ENCODE measurements at regions of chr3 and their contacts with region 1.

Region 1: GRCh38 chr3:99638167-99638948 is at the start of gene COL8A1:
- DNase-seq: peak; percentile 47
- H3K4me3 ChIP-seq: peak within 1 kb of the TSS; percentile 89
- H3K27ac ChIP-seq: peak within 1 kb of the TSS; percentile 96
- H3K27me3 ChIP-seq: no peaks in the 10 kb centered on the region
- CTCF ChIP-seq: no peak
- polyA plus RNA-seq, gene COL8A1: 101 and 147 TPM in 2 replicates

Region 2: GRCh38 chr3:99666201-99666600 is 27.8 kb after region 1 on chr3:
- CTCF ChIA-PET with region 1: no interaction called
- POLR2A ChIA-PET with region 1: no interaction called
- DNase-seq: no peak
- H3K4me3 ChIP-seq: no peak overlapping the region
- H3K27ac ChIP-seq: no peak overlapping the region
- H3K27me3 ChIP-seq: no peaks in the 10 kb centered on the region
- CTCF ChIP-seq: no peak

Region 3: DNA sequence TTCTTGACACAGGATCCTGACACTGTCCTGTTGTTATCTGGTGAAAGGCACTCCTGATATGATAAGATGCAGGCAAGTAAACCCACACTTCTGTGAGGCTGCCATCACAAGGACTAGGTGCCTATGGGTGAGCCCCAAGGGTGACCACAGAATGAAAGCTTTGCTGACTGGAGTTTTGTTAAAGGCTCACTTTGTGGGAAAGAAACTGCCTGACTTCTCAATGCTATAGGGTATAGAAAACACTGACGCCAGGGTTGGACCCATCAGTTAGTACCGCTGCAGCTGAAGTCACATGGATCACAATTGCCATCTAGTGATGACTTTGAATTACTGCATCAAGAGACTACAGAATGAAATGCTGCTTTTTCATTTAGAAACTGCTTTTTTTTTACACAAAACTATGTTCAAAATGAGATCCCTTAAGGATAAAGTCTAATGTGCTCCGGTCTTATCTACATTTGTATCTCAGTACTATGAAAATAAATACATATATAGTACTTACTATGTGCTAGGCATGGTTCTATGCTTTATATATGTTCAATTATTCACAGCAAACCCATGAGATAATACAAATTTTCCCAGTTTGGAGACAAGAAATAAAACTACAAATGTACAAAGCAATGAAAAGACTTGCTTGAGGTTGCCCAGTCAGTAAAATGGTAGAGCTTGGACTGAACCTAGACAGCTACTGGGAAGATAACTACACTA is 115.1 kb after region 1 on chr3:
- CTCF ChIA-PET with region 1: interaction called, 13 read pairs
- POLR2A ChIA-PET with region 1: no interaction called
- DNase-seq: peak; percentile 63
- H3K4me3 ChIP-seq: no peak overlapping the region
- H3K27ac ChIP-seq: no peak overlapping the region
- H3K27me3 ChIP-seq: no peaks in the 10 kb centered on the region
- CTCF ChIP-seq: peak; percentile 84